Activated CD4-positive, alpha-beta memory T cell treated with anti-CD3 and anti-CD28 coated beads, Interleukin-2, amount 10 ng/mL, durations not matched to agents 7 days and 5 days (primary cell): ENCODE measurements at regions of chr10 and their contacts with region 1.

Region 1: DNA sequence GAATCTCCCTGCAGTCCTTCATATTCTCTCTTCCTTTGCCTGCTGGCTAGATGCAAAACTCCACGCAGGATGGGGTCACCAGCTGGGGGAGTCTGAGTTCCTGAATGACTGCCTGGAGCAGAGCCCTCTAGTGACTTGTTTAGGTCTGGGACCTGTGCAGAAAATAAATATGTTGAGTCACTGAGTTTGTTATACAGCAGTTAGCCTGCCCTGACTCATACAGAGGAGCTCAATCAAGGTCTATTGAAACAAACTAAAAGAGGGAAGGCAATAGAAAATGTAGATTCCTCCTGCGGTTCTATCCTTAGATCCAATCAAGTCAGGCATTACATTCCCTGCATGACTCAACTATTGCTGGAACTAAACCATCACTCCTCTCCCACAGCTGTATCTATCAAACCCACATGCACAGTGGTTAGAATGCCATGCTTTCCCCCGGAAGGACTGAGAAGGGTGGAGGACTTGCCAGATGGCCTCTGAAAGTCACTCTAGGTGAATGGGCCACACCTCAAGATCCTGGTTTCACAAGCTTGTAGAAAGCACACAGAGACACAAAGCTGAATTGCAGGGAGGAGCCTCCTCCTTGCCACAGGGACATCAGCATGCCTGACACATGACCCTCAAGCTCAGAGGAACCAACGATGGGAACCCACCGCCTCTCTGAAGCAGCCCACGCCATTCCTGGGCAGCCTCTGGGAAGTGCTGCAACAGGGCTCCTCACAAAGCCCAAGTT is 73.9 kb downstream of the SH3PXD2A start:
- DNase-seq: peak; percentile 36
- H3K4me3 Mint-ChIP-seq: no peak overlapping the region
- H3K27ac Mint-ChIP-seq: peak overlapping the region; percentile 73
- H3K4me1 Mint-ChIP-seq: peaks cover 29% of the 10 kb centered on the region
- H3K27me3 Mint-ChIP-seq: peaks cover 10% of the 10 kb centered on the region

Region 2: GRCh38 chr10:103745341-103746227 is 35.9 kb before region 1 on chr10:
- CTCF ChIA-PET with region 1: interaction called, 38 read pairs
- POLR2A ChIA-PET with region 1: interaction called, 36 read pairs
- DNase-seq: peak; percentile 79
- H3K4me3 Mint-ChIP-seq: peak overlapping the region; percentile 62
- H3K27ac Mint-ChIP-seq: peak overlapping the region; percentile 93
- H3K4me1 Mint-ChIP-seq: peaks cover 57% of the 10 kb centered on the region
- H3K27me3 Mint-ChIP-seq: no peaks in the 10 kb centered on the region

Region 3: DNA sequence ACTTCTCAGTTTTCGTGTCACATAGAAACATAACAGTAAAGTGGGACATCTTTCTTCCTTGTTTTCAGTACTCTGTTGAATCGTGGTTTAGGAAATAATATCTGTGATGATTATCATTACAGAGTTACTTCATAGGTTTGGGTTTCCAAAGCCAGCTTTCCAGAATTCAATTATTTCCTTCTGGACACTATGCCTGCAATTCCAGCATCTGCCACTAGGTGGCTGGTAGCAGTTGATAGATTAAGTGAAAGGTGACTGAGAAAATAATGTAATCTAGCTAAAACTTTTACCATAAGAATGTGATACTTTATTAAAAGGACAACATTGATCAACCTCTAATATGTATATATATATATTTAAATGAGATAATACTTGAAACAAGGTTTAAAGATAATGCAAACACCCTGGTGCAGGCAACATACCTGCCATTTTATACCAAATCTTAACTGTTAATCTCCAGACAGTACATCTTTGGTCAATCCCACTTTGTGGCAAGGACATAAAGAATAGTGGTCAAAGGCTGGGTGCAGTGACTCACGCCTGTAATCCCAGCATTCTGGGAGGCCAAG is 28.7 kb before region 1 on chr10:
- CTCF ChIA-PET with region 1: interaction called, 38 read pairs
- POLR2A ChIA-PET with region 1: interaction called, 36 read pairs
- DNase-seq: peak; percentile 29
- H3K4me3 Mint-ChIP-seq: no peak overlapping the region
- H3K27ac Mint-ChIP-seq: no peak overlapping the region
- H3K4me1 Mint-ChIP-seq: peaks cover 48% of the 10 kb centered on the region
- H3K27me3 Mint-ChIP-seq: no peaks in the 10 kb centered on the region

Region 4: GRCh38 chr10:103759100-103759781 is 22.3 kb before region 1 on chr10:
- CTCF ChIA-PET with region 1: interaction called, 29 read pairs
- POLR2A ChIA-PET with region 1: interaction called, 10 read pairs
- DNase-seq: peak; percentile 51
- H3K4me3 Mint-ChIP-seq: no peak overlapping the region
- H3K27ac Mint-ChIP-seq: peak overlapping the region; percentile 75
- H3K4me1 Mint-ChIP-seq: peaks cover 67% of the 10 kb centered on the region
- H3K27me3 Mint-ChIP-seq: no peaks in the 10 kb centered on the region

Region 5: DNA sequence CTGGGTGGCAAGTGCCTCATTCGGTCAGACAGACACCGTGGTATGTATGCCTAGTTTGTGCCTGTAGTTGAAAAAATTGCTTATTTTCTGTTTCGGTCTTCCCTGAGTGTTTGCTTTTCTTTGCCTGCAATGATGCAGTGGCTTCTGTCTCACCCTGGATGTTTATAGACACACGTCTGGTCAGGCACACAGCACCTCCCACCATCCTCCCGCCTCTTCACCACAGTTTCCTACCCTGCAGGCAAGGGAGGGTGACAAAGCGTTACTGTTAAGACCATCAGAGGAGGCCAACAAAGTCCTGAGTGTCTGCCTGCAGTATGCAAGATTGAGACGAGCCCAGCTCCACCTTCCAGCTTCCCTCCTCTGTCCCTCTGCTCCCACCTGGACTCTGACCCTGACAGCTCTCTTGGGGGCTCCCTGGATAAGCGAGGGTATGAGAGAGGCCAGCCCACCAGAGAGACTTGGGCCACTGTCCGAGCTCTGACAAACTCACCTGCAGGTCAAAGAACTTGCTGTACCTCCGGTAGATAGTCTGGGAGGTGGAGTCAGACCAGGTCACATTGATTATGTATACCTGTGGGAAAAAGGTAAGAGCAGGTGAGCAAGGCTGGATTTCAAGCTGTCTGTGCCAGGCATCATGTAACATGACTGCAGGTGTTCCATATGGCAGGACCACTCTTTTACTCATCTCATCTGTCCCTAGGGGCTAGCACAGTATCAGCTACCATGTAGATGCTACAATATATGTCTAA is 19.5 kb after region 1 on chr10:
- CTCF ChIA-PET with region 1: interaction called, 17 read pairs
- POLR2A ChIA-PET with region 1: interaction called, 7 read pairs
- DNase-seq: peak; percentile 80
- H3K4me3 Mint-ChIP-seq: peak overlapping the region; percentile 5
- H3K27ac Mint-ChIP-seq: peak overlapping the region; percentile 80
- H3K4me1 Mint-ChIP-seq: peaks cover 44% of the 10 kb centered on the region
- H3K27me3 Mint-ChIP-seq: peaks cover 2% of the 10 kb centered on the region

Region 6: DNA sequence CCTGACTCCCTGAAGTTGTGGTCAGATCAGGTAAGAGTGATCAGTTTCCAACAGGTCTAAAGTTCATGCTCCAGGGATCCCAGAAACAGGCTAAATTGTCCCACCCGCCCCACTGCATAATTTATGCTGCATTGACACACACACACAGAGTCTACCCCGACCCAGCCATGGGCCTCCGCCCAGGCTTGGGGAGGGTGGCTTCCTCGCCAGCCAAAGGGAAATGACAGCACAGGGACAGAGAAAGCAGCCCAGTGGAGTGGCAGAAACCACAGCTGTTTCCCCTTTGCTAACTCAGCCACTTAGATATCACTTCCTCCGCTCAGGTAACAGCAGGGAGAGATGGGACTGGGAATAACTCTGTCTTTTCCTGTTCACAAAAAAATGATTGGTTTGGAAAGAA is 64.5 kb after region 1 on chr10:
- CTCF ChIA-PET with region 1: interaction called, 16 read pairs
- POLR2A ChIA-PET with region 1: interaction called, 3 read pairs
- DNase-seq: peak; percentile 76
- H3K4me3 Mint-ChIP-seq: peak overlapping the region; percentile 18
- H3K27ac Mint-ChIP-seq: peak overlapping the region; percentile 85
- H3K4me1 Mint-ChIP-seq: peaks cover 46% of the 10 kb centered on the region
- H3K27me3 Mint-ChIP-seq: peaks cover 25% of the 10 kb centered on the region

Region 7: DNA sequence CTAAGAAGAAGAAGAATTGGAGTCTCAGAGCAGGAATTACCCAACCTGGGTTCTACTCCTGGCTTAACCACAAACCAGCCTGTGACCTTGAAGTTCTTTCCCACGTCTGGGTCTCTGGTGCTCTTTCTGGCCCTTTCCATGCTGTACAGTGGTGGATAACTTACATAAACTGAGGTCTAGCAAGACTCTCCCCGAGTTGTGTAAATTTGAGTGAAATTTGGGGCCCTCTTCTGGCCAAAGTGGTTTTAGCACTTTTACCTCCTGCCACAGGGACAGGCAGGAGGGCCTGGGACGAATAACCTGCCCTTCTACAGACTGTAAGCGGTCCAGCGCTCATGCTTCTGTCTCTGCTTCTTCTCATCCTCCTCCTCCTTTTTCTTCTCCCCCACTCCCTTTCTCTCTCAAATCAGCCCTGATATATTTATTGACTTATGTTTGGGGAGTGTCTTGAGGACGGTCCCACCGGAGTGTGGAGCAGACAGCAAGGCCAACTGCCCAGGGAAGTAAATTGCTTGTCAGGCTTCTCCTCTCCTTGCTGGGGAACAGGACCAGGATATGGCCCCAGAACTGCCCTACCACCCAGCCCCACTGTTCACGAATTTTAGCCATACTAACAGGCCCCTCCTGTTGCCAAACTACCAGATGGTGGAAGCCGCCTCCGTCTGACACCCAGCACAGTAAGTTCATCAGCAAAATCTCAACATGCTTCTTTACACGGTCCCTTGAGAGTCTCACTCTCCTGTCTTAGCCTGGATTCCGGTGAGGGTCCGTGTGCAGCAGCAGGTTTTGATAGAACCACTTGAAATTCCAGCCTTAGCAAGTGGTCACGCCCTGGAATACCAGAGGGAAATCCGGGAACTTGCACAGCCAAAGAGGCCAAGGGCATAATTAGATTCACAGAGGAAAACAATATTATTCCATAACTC is 77.9 kb after region 1 on chr10:
- CTCF ChIA-PET with region 1: interaction called, 19 read pairs
- POLR2A ChIA-PET with region 1: no interaction called
- DNase-seq: peak; percentile 73
- H3K4me3 Mint-ChIP-seq: no peak overlapping the region
- H3K27ac Mint-ChIP-seq: no peak overlapping the region
- H3K4me1 Mint-ChIP-seq: peaks cover 8% of the 10 kb centered on the region
- H3K27me3 Mint-ChIP-seq: peaks cover 33% of the 10 kb centered on the region